ENCODE measurements at regions of chr1 and their contacts with region 1.

Region 1: DNA sequence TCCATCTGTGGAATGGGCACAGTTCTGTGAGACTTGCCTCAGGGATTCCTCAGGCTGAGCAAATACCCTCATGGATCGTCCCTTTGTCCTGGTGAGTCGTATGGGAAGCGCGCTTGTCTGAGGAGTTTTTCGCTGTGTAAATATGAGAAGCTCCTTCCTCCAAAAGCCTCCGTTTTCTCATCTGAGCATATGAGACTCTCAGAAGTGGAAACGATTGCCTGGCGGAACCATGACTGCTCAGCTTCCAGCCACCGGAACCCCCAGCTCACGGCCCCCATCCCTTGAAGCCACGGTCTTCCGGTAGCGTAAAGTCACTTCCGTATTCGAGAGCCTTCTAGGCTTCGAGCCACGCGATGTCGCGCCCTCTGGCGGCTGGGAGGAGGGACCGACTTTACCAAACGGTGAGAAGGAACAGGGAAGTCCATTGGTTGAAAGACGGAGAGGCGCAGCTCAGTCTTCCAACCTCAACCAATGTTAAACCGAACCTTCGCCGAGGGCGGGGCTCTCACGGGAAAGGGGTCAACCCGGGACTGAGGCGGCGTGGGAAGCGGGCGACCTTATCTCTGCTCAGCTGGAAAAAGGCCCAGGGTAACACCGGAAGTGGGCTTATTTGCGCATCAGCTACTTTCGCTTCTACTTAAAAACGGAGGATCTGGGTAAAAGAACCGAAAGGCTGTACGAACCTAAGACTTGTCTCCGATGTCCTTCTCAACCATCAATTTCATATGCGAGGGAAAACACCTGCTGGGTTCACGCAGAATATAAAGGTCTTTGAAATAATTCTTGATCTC is 46.2 kb downstream of the AZIN2 start:
- DNase-seq: peak; percentile 92 to 98 (median 97)
- H3K4me3 ChIP-seq: peak overlapping the region; percentile 57 to 96 (median 80)
- H3K27ac ChIP-seq: peak overlapping the region; percentile 71 to 97 (median 90)
- H3K27me3 ChIP-seq: no peaks in the 10 kb centered on the region
- CTCF ChIP-seq: peak; percentile 88 to 99 (median 96)

Region 2: GRCh38 chr1:32962248-32962896 is 164.8 kb before region 1 on chr1:
- intact Hi-C with region 1: no loop called
- DNase-seq: no peak
- H3K4me3 ChIP-seq: peak overlapping the region; percentile 61 to 98 (median 88)
- H3K27ac ChIP-seq: peak overlapping the region in 22 of 59 donors; percentile 3 to 92 (median 32)
- H3K27me3 ChIP-seq: no peaks in the 10 kb centered on the region
- CTCF ChIP-seq: no peak

Region 3: GRCh38 chr1:33460947-33461629 is 333.9 kb after region 1 on chr1:
- intact Hi-C with region 1: loop called in 1 of 2 experiments (anchors 5 kb)
- DNase-seq: peak in 2 of 10 donors; percentile 26 to 43
- H3K4me3 ChIP-seq: no peak overlapping the region
- H3K27ac ChIP-seq: peak overlapping the region in 33 of 59 donors; percentile 3 to 77 (median 41)
- H3K27me3 ChIP-seq: no peaks in the 10 kb centered on the region
- CTCF ChIP-seq: no peak